Endothelial cell of umbilical vein (primary cell): ENCODE measurements at regions of chr10 and their contacts with region 1.

Region 1: GRCh38 chr10:43689955-43690771 is 41.5 kb upstream of the ZNF32 start:
- DNase-seq: peak; percentile 74
- H3K4me3 ChIP-seq: peak overlapping the region in 2 of 3 experiments; percentile 22 to 35
- H3K27ac ChIP-seq: peak overlapping the region; percentile 7
- H3K4me1 ChIP-seq: peaks cover 31% of the 10 kb centered on the region
- H3K27me3 ChIP-seq: no peaks in the 10 kb centered on the region
- CTCF ChIP-seq: peak; percentile 90 to 91
- POLR2A ChIP-seq: no peak

Region 2: GRCh38 chr10:43772171-43772570 is 82.0 kb after region 1 on chr10:
- CTCF ChIA-PET with region 1: interaction called, 9 read pairs
- POLR2A ChIA-PET with region 1: no interaction called
- dilution Hi-C with region 1: no loop called
- intact Hi-C with region 1: loop called (anchors 5 kb)
- DNase-seq: no peak
- H3K4me3 ChIP-seq: no peak overlapping the region
- H3K27ac ChIP-seq: no peak overlapping the region
- H3K4me1 ChIP-seq: peaks cover 11% of the 10 kb centered on the region
- H3K27me3 ChIP-seq: no peaks in the 10 kb centered on the region
- CTCF ChIP-seq: no peak
- POLR2A ChIP-seq: no peak

Region 3: GRCh38 chr10:43863859-43864591 is 173.9 kb after region 1 on chr10:
- CTCF ChIA-PET with region 1: interaction called, 25 read pairs
- POLR2A ChIA-PET with region 1: no interaction called
- dilution Hi-C with region 1: no loop called
- intact Hi-C with region 1: loop called (anchors 1 kb)
- DNase-seq: peak; percentile 95
- H3K4me3 ChIP-seq: no peak overlapping the region
- H3K27ac ChIP-seq: peak overlapping the region; percentile 93
- H3K4me1 ChIP-seq: peaks cover 58% of the 10 kb centered on the region
- H3K27me3 ChIP-seq: no peaks in the 10 kb centered on the region
- CTCF ChIP-seq: no peak
- POLR2A ChIP-seq: peak; percentile 19

Region 4: DNA sequence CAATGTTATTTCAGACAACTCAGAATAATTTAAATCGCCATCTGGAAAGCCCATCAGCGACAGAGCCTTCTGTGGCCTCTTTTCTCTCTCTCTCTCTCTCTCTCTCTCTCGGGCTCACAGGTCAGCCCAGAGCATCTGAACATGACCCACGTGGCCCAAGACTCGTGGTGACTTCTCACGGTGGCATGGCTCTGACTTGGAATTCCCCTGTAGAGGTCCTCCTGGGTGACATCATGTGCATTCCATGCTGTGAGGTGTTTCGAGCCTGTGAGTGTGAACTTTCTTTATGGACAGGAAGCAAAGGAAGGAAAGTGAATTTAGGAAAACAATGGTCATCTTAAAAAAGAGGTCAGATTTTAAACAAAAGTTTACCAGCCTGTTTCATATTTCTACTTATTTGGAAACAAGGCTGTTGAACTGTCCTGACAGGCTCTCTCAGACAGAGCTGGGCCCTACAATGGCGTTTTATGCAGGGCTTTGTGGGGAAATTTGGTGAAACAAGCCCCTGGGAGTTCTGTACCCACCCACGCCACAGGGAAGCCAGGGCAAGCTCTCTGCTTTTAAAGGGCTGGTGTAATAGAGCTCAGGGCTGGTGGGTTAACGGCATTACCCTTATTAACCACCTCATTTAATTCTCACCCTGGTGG is 318.2 kb after region 1 on chr10:
- CTCF ChIA-PET with region 1: interaction called, 5 read pairs
- POLR2A ChIA-PET with region 1: no interaction called
- dilution Hi-C with region 1: no loop called
- intact Hi-C with region 1: loop called (anchors 1 kb)
- DNase-seq: peak; percentile 76
- H3K4me3 ChIP-seq: no peak overlapping the region
- H3K27ac ChIP-seq: peak overlapping the region; percentile 90
- H3K4me1 ChIP-seq: peaks cover 18% of the 10 kb centered on the region
- H3K27me3 ChIP-seq: no peaks in the 10 kb centered on the region
- CTCF ChIP-seq: no peak
- POLR2A ChIP-seq: no peak

Region 5: DNA sequence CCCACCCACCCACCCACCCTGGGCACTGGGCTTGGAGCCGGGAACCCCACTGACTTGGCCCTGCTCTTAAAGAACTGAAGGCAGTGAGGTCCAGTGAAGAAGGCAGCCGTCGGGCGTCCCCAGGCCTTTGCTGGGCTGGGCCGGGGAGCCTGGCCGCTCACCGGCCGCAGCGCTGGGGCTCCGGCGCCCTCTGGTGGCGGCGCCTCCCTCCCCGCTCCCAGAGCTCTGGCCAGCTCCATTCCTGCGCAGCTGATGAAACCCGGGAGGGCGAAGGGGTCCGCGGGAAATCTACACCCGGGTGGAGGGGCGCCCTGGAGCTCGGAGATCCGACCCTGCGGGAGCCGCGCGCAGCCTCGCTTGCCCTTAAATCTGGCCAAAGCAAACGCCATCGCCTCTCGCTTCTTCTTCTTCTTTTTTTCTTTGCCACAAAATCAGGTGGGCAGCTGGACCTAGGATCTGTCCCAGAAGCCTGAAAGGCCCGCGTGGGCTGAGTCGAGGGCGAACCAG is 696.4 kb after region 1 on chr10:
- CTCF ChIA-PET with region 1: interaction called, 90 read pairs
- POLR2A ChIA-PET with region 1: no interaction called
- dilution Hi-C with region 1: no loop called
- intact Hi-C with region 1: loop called (anchors 1 kb)
- DNase-seq: peak; percentile 37
- H3K4me3 ChIP-seq: no peak overlapping the region
- H3K27ac ChIP-seq: no peak overlapping the region
- H3K4me1 ChIP-seq: no peaks in the 10 kb centered on the region
- H3K27me3 ChIP-seq: peaks cover 15 to 25% of the 10 kb centered on the region in 2 experiments
- CTCF ChIP-seq: peak; percentile 81 to 94
- POLR2A ChIP-seq: no peak